Right ventricle myocardium superior (tissue), 1 donor: ENCODE measurements at regions of chr12 and their contacts with region 1.

Region 1: DNA sequence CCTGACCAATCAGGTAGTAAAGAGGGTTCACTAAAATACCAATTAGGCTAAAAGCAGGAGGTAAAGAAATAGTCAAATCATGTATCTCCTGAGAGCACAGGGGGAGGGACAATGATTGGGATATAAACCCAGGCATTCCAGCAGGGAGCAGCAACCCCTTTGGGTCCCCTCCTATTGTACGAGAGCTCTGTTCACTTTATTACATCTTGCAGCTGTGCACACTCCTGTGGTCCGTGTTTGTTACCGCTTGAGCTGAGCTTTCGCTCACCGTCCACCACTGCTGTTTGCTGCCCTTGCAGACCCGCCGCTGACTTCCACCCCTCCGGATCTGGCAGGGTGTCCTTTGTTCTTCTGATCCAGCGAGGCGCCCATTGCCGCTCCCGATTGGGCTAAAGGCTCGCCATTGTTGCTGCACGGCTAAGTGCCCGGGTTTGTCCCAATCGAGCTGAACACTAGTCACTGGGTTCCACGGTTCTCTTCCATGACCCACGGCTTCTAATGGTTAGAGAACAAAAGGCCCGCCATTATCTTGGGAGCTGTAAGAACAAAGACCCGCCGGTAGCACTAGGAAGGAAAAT is 64.1 kb downstream of the E2F7 start:
- DNase-seq: no peak
- ATAC-seq: no peak

Region 2: GRCh38 chr12:76820888-76821482 is 180.3 kb before region 1 on chr12:
- intact Hi-C with region 1: loop called (anchors 10 kb)
- DNase-seq: no peak
- ATAC-seq: no peak